ENCODE measurements at regions of chr12 and their contacts with region 1.

Region 1: GRCh38 chr12:49623142-49623904 is at the start of gene PRPF40B:
- DNase-seq: peak; percentile 92
- ATAC-seq: peak; percentile 76
- H3K4me3 Mint-ChIP-seq: peak within 1 kb of the TSS; percentile 72
- H3K27ac Mint-ChIP-seq: peak within 1 kb of the TSS; percentile 86
- H3K4me1 Mint-ChIP-seq: peaks cover 31% of the 10 kb centered on the region
- H3K27me3 Mint-ChIP-seq: peaks cover 11% of the 10 kb centered on the region
- total RNA-seq, gene PRPF40B: 6.9 to 8.1 TPM

Region 2: GRCh38 chr12:49358483-49359141 is 264.7 kb before region 1 on chr12:
- CTCF ChIA-PET with region 1: interaction called, 7 read pairs
- POLR2A ChIA-PET with region 1: no interaction called
- intact Hi-C with region 1: loop called in 1 of 2 experiments (anchors 5 kb)
- DNase-seq: peak; percentile 71
- ATAC-seq: peak; percentile 98
- H3K4me3 Mint-ChIP-seq: no peak overlapping the region
- H3K27ac Mint-ChIP-seq: no peak overlapping the region
- H3K4me1 Mint-ChIP-seq: peaks cover 6% of the 10 kb centered on the region
- H3K27me3 Mint-ChIP-seq: peaks cover 24% of the 10 kb centered on the region

Region 3: DNA sequence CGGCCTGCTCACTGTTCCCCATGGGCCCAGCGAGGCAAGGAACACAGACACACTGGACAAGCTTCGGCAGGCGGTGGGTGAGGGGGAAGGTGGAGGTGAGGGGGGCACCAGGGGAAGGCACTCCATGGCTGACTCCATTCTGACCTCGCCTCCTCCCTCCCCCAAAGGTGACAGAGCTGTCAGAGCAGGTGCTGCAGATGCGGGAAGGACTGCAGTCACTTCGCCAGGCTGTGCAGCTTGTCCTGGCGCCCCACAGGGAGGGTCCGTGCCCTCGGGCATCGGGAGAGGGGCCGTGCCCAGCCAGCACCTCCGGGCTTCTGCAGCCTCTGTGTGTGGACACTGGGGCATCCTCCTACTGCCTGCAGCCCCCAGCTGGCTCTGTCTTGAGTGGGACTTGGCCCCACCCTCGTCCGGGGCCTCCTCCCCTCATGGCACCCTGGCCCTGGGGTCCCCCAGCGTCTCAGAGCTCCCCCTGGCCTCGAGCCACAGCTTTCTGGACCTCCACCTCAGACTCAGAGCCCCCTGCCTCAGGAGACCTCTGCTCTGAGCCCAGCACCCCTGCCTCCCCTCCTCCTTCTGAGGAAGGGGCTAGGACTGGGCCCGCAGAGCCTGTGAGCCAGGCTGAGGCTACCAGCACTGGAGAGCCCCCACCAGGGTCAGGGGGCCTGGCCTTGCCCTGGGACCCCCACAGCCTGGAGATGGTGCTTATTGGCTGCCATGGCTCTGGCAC is 66.0 kb before region 1 on chr12:
- CTCF ChIA-PET with region 1: no interaction called
- POLR2A ChIA-PET with region 1: no interaction called
- intact Hi-C with region 1: no loop called
- DNase-seq: no peak
- ATAC-seq: no peak
- H3K4me3 Mint-ChIP-seq: no peak overlapping the region
- H3K27ac Mint-ChIP-seq: no peak overlapping the region
- H3K4me1 Mint-ChIP-seq: peaks cover 5% of the 10 kb centered on the region
- H3K27me3 Mint-ChIP-seq: no peaks in the 10 kb centered on the region

Region 4: DNA sequence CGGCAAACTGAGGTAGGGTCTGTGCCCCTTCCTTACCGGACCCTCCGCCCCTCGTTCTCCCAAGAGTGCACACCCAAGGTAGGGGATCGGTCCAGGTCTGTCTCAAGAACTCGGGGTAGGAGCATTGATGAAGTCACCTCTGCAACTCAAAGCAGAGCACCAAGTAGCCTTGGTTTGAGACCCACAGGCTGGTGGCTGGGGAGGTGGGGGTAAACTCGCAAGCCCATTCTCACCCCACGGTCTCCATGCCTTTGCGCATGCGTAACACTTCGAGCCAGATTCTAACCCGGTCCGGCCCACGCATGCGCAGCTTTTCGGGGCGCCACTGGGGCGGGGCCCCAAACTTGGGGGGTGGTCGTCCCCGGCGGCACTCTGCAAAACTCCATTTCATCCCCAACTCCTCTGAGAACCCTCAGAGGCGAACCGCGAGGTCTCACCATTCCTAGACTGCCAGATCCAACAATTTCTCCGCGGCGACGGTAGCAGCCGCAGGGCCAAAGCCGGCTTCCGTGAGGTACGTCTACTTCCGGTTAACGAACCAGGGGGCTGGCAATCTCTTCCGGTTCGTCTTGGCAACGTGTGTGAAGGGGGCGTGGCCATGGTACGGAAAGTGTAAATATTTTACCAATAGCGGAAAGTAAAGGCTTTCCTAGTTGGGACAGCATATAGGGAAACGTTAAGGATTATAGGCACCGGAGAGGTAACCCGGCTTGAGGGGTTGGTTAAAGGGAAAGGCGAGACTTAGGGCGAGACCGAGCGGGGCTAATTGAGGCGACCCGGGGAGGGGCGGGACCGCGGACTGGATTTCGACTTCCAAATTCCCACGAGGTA is 55.5 kb before region 1 on chr12 and contains the start of gene MCRS1:
- CTCF ChIA-PET with region 1: interaction called, 4 read pairs
- POLR2A ChIA-PET with region 1: interaction called, 3 read pairs
- intact Hi-C with region 1: loop called (anchors 1 to 2 kb)
- DNase-seq: peak; percentile 93
- ATAC-seq: peak; percentile 88
- H3K4me3 Mint-ChIP-seq: peak within 1 kb of the TSS; percentile 90
- H3K27ac Mint-ChIP-seq: peak within 1 kb of the TSS; percentile 95
- H3K4me1 Mint-ChIP-seq: peaks cover 37% of the 10 kb centered on the region
- H3K27me3 Mint-ChIP-seq: no peaks in the 10 kb centered on the region
- total RNA-seq, gene MCRS1: 48.2 to 58.2 TPM

Region 5: GRCh38 chr12:49644620-49644994 is 21.3 kb after region 1 on chr12:
- CTCF ChIA-PET with region 1: interaction called, 29 read pairs
- POLR2A ChIA-PET with region 1: no interaction called
- intact Hi-C with region 1: loop called in 1 of 2 experiments (anchors 1 kb)
- DNase-seq: peak; percentile 89
- ATAC-seq: peak; percentile 93
- H3K4me3 Mint-ChIP-seq: no peak overlapping the region
- H3K27ac Mint-ChIP-seq: peak overlapping the region; percentile 78
- H3K4me1 Mint-ChIP-seq: peaks cover 18% of the 10 kb centered on the region
- H3K27me3 Mint-ChIP-seq: no peaks in the 10 kb centered on the region

Region 6: GRCh38 chr12:49655595-49656236 is 32.4 kb after region 1 on chr12:
- CTCF ChIA-PET with region 1: no interaction called
- POLR2A ChIA-PET with region 1: no interaction called
- intact Hi-C with region 1: no loop called
- DNase-seq: no peak
- ATAC-seq: no peak
- H3K4me3 Mint-ChIP-seq: no peak overlapping the region
- H3K27ac Mint-ChIP-seq: peak overlapping the region; percentile 28
- H3K4me1 Mint-ChIP-seq: peaks cover 22% of the 10 kb centered on the region
- H3K27me3 Mint-ChIP-seq: no peaks in the 10 kb centered on the region

Region 7: GRCh38 chr12:49750027-49750995 is 127.0 kb after region 1 on chr12:
- CTCF ChIA-PET with region 1: interaction called, 4 read pairs
- POLR2A ChIA-PET with region 1: no interaction called
- intact Hi-C with region 1: loop called in 1 of 2 experiments (anchors 5 kb)
- DNase-seq: peak; percentile 81
- ATAC-seq: peak; percentile 87
- H3K4me3 Mint-ChIP-seq: peak overlapping the region; percentile 69
- H3K27ac Mint-ChIP-seq: peak overlapping the region; percentile 98
- H3K4me1 Mint-ChIP-seq: peaks cover 87% of the 10 kb centered on the region
- H3K27me3 Mint-ChIP-seq: no peaks in the 10 kb centered on the region

Region 8: DNA sequence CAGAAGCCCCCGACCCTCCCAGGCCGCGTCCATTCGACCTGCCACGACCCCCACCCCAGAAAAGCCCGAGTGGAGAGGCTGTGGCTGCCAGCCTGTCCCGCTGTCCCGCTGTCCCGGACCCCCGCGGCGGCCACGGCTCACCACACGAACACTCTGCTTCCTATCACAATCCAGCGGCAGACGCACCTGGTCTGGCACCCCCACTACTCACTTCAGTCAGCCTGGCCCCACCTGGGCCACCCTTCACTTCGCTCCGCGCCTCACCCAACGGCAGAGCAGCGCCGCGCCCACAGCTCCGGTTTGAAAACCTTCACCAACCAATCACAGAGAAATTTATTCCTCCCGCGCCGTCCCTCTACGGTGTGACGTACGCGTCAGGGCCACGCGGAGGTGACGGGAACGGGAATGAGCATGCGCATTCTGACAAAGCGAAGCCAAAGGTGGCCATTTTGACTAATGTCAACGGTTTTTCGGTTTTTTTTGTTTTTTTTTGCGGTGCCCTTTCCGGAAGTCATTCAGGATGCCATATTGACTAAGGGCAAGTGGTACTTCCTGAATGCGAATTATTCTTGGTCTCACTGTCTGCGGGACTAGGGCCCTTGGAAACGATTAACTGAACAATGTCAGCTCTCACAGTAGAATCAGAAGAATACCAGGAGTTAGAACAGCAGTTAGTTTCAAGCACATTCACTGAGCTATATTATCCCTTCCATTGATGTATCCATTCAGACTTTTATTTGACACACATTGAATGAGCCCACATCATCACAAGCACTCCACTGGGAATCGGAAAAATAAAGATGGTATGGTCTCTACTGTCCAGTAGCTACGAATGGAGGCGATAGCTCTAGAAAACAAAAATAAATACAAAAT is 402.1 kb after region 1 on chr12 and contains the start of gene RACGAP1:
- CTCF ChIA-PET with region 1: no interaction called
- POLR2A ChIA-PET with region 1: no interaction called
- intact Hi-C with region 1: loop called in 1 of 2 experiments (anchors 2 kb)
- DNase-seq: peak; percentile 97
- ATAC-seq: peak; percentile 98
- H3K4me3 Mint-ChIP-seq: peak within 1 kb of the TSS; percentile 90
- H3K27ac Mint-ChIP-seq: peak within 1 kb of the TSS; percentile 95
- H3K4me1 Mint-ChIP-seq: peaks cover 23% of the 10 kb centered on the region
- H3K27me3 Mint-ChIP-seq: no peaks in the 10 kb centered on the region
- total RNA-seq, gene RACGAP1: 99.7 to 118 TPM

Region 9: GRCh38 chr12:50167041-50167828 is 543.9 kb after region 1 on chr12 and contains the start of gene CERS5:
- CTCF ChIA-PET with region 1: no interaction called
- POLR2A ChIA-PET with region 1: no interaction called
- intact Hi-C with region 1: loop called in 1 of 2 experiments (anchors 2 kb)
- DNase-seq: peak; percentile 99
- ATAC-seq: peak; percentile 99
- H3K4me3 Mint-ChIP-seq: peak within 1 kb of the TSS; percentile 85
- H3K27ac Mint-ChIP-seq: peak within 1 kb of the TSS; percentile 96
- H3K4me1 Mint-ChIP-seq: peaks cover 27% of the 10 kb centered on the region
- H3K27me3 Mint-ChIP-seq: no peaks in the 10 kb centered on the region
- total RNA-seq, gene CERS5: 49.4 to 64.4 TPM

Region 10: DNA sequence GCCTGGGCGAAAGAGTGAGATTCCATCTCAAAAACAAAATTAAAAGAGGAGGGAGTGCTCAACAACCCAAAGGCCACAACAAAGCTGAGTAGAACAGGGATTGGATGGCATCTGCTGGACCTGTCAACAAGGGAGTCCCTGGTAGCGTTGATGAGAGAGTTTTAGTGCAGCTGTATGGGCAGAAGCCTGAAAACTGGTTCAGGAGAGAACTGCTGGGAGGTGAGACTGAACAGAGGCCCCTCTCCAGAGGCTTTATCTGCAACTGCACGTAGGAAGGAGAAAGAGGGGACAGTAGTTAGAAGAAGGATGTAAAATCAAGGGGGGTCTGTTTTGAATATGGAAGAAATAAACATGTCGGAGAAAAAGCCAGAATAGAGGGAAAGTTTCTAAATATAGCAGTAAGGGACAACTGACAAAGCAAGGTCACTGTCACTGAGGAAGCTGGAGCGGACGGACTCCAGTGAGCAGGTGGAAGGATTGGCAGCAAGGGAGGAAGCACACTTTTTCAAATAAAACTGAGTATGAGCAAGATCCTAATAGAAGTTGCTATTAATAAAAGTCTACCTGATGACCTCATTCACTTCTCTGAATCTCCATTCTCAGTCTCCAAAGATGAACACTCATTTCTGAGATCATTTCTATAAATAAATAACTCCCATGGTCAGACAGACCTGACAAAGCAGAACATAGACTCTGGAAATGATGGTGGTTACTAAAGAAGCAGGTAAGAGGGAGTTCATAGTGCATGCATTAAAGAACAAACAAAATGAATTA is 1128.8 kb after region 1 on chr12:
- CTCF ChIA-PET with region 1: no interaction called
- POLR2A ChIA-PET with region 1: no interaction called
- intact Hi-C with region 1: no loop called
- DNase-seq: no peak
- ATAC-seq: peak; percentile 44
- H3K4me3 Mint-ChIP-seq: no peak overlapping the region
- H3K27ac Mint-ChIP-seq: no peak overlapping the region
- H3K4me1 Mint-ChIP-seq: no peaks in the 10 kb centered on the region
- H3K27me3 Mint-ChIP-seq: no peaks in the 10 kb centered on the region